ENCODE measurements at regions of chr2 and their contacts with region 1.

Region 1: DNA sequence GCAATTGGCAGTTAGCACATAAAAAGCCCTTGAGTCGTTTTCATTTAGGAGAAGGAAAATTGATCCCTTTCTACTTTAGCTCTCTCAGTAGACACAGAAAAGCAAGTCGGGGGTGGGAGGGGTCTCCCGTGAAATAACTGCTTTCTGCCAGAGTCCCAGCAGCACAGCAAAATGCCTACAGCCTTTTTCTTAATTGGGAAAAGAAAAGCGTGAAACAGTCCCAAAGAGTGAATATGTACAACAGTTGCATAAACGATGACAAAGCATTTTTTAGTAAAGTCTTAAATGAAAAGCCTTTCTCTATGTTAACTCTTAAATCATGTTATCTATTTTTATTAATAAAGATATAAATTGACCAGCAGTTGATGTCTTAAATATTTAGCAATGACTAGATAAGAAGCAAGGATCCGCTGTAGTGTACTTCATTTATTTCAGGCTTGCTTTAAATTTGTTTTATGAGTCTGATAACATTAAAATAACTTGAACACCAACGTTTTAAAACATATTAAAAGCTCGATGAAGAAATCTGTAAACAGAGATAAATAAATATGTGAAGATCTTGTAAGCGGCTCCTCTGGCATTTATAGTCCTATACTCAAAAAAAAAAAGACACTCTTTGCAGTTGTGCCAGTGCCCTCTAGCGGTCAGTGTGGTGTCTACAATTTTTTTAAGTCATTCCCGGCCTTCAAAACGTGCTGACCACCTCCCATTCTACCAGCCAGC is 42.3 kb upstream of the ATIC start:
- DNase-seq: peak; percentile 72
- ATAC-seq: peak; percentile 69
- H3K4me3 ChIP-seq: no peak overlapping the region
- H3K27ac ChIP-seq: no peak overlapping the region
- H3K4me1 ChIP-seq: no peaks in the 10 kb centered on the region; a peak in 1 of 4 replicates
- H3K27me3 ChIP-seq: no peaks in the 10 kb centered on the region
- CTCF ChIP-seq: peak; percentile 44 to 87 (median 65); a peak in 5 of 6 replicates
- POLR2A ChIP-seq: no peak
- RAD21 ChIP-seq: peak; percentile 80

Region 2: GRCh38 chr2:213806125-213806726 is 1463.3 kb before region 1 on chr2:
- CTCF ChIA-PET with region 1: no interaction called
- POLR2A ChIA-PET with region 1: no interaction called
- RAD21 ChIA-PET with region 1: no interaction called
- intact Hi-C with region 1: loop called (anchors 5 kb)
- DNase-seq: no peak
- ATAC-seq: no peak
- H3K4me3 ChIP-seq: no peak overlapping the region
- H3K27ac ChIP-seq: no peak overlapping the region
- H3K4me1 ChIP-seq: no peaks in the 10 kb centered on the region
- H3K27me3 ChIP-seq: no peaks in the 10 kb centered on the region
- CTCF ChIP-seq: peak in 2 of 3 experiments; percentile 44 to 57; a peak in 3 of 6 replicates
- POLR2A ChIP-seq: no peak
- RAD21 ChIP-seq: peak; percentile 66

Region 3: DNA sequence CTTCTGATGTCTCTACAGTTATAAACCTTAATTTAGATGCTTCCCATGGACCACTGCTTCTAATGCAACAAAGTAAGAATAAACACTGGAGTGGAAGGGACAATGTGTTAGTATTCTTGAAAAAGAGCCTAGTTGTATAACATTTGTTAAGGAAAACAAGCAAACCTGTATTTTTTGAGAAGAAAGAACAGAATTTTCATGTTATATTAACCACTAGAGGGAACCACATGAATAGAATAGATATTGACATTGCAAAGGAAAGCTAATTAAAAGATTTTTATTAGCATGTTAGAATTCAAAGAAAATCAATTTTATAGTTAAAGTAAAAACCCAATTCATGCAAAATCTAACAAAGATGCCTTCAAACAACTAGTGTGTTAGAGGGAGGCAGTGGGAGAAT is 308.9 kb before region 1 on chr2:
- CTCF ChIA-PET with region 1: interaction called, 3 read pairs
- POLR2A ChIA-PET with region 1: no interaction called
- RAD21 ChIA-PET with region 1: no interaction called
- intact Hi-C with region 1: loop called (anchors 2 kb)
- DNase-seq: no peak
- ATAC-seq: no peak
- H3K4me3 ChIP-seq: no peak overlapping the region
- H3K27ac ChIP-seq: no peak overlapping the region
- H3K4me1 ChIP-seq: no peaks in the 10 kb centered on the region
- H3K27me3 ChIP-seq: no peaks in the 10 kb centered on the region
- CTCF ChIP-seq: peak in 2 of 3 experiments; percentile 32 to 46; a peak in 3 of 6 replicates
- POLR2A ChIP-seq: no peak
- RAD21 ChIP-seq: peak; percentile 65

Region 4: DNA sequence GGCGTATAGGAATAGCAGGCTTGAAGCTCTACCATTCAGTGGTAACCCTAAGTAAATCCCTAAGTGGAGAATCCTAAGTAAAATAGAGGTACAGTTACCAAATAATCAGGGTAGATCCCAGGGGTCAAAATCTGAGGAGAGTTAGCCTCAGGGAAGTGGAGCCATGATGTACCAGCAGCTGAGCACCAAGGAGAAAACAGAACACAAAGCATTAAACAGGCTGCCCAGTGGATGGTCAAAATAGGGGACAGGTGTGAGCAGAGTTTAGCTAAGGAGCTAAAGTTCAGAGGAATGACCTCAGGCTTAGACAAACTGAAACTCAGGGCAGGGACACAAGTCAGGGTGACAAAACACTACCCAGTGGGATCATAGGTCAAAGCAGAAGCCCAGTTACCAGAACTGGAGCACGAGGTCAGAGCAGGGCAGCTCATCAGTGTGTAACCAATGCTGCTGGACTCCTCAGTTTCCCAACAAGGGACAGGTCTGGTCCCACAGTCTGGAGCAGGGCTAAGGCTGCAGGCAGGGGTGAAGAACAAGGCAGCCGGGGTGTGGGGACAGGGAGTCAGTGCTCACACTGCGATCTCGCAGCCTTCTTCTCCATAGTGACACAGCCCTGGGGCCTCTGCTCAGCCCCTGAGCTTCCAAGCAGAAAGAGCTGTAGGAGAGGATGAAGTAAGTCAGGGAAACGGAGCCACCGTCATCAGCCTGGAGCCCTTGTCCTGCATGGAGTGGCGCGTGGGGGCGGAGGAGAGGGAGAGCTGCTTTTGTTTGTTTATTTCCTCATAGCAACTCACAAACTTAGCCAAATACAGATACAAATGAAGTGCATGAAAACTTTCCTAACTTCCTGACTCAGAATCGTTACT is 479.8 kb after region 1 on chr2:
- CTCF ChIA-PET with region 1: no interaction called
- POLR2A ChIA-PET with region 1: no interaction called
- RAD21 ChIA-PET with region 1: no interaction called
- intact Hi-C with region 1: no loop called
- DNase-seq: no peak
- ATAC-seq: no peak
- H3K4me3 ChIP-seq: no peak overlapping the region
- H3K27ac ChIP-seq: no peak overlapping the region
- H3K4me1 ChIP-seq: no peaks in the 10 kb centered on the region
- H3K27me3 ChIP-seq: no peaks in the 10 kb centered on the region
- CTCF ChIP-seq: no peak
- POLR2A ChIP-seq: no peak
- RAD21 ChIP-seq: no peak